ENCODE measurements at regions of chr3 and their contacts with region 1.

Region 1: GRCh38 chr3:105327662-105328337 is 38.9 kb upstream of the ALCAM start:
- DNase-seq: peak; percentile 6
- ATAC-seq: no peak
- H3K4me3 ChIP-seq: no peak overlapping the region
- H3K27ac ChIP-seq: no peak overlapping the region
- H3K4me1 ChIP-seq: no peaks in the 10 kb centered on the region; the same call in 1 of the 2 replicates
- H3K27me3 ChIP-seq: no peaks in the 10 kb centered on the region
- CTCF ChIP-seq: no peak
- POLR2A ChIP-seq: no peak
- RAD21 ChIP-seq: no peak

Region 2: DNA sequence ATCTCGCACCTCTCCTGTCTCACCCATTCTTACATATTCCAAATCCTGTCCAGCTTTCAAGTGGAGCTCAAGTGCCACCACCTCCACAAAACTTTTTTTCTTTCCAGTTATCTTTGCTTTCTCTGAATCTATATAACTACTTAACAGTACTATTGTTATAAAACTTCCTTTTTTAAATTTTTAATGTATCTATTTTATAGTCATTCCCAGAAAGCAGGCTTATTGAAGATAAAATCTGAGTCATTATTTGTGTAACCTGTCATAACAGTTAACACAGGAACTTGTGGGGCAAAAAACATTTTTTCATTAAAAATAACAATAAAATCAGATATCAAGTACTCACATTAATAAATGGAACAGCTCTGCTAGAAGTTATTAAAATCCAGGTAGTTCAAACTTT is 34.4 kb before region 1 on chr3:
- CTCF ChIA-PET with region 1: no interaction called
- POLR2A ChIA-PET with region 1: no interaction called
- dilution Hi-C with region 1: no loop called
- in situ Hi-C with region 1: no loop called
- intact Hi-C with region 1: loop called (anchors 5 kb)
- DNase-seq: no peak
- ATAC-seq: no peak
- H3K4me3 ChIP-seq: no peak overlapping the region
- H3K27ac ChIP-seq: no peak overlapping the region
- H3K4me1 ChIP-seq: no peaks in the 10 kb centered on the region
- H3K27me3 ChIP-seq: no peaks in the 10 kb centered on the region
- CTCF ChIP-seq: no peak
- POLR2A ChIP-seq: no peak
- RAD21 ChIP-seq: no peak

Measured in IMR-90 (cell line).